ENCODE measurements at regions of chr11 and their contacts with region 1.

Region 1: GRCh38 chr11:62665075-62665598 is at the starts of genes C11orf98 and CSKMT:
- DNase-seq: peak; percentile 85
- ATAC-seq: peak; percentile 86
- H3K4me3 ChIP-seq: peak within 1 kb of the TSS; percentile 69 to 97 (median 91)
- H3K27ac ChIP-seq: peak within 1 kb of the TSS; percentile 84
- H3K4me1 ChIP-seq: peaks cover 47% of the 10 kb centered on the region
- H3K27me3 ChIP-seq: no peaks in the 10 kb centered on the region; a peak in 1 of 5 replicates
- CTCF ChIP-seq: no peak
- EP300 ChIP-seq: peak in 1 of 2 experiments; percentile 11; a peak in 2 of 4 replicates
- POLR2A ChIP-seq: peak; percentile 97 to 99
- RAD21 ChIP-seq: peak; percentile 55
- total RNA-seq, gene C11orf98: 91.8 and 109 TPM in 2 replicates
- total RNA-seq, gene CSKMT: 9.9 and 31.8 TPM in 2 replicates

Region 2: DNA sequence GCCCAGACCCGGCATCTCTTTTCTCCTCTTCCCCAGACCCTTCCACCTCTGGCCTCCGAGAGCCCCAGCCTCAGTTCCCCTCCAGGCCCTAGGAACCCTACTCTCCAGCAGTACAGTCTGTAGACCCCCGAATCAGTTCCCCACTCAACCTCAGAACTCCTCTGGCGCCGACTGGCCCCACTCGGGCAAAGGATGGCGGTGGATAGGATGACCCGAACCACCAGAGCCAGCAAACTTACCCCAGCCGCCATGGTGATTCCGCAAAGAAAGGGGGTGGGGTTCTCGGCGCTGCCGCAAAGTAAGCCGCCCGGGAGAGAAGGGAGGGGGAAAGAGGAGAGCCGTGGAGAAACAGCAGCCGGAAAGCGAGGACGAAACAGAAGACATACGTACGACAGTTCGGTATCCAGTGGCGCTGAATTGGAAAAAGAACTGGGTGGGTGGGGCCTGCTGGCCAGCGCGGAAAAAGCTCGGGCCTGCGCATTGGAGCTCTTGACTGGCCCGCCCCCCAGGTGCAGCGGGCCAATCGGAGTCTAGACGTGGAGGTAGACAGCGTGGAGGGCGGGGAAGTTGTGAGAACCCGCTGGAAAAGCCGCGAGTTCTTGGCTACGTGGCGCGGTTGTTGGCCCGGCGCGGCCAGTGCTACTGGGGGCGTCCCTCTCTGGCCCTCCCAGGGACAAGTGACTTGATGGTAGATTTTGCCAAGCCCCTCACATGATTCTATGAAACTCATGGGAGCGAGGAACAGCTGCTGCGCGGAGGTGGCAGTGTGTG is 91.4 kb before region 1 on chr11 and contains the start of gene EEF1G:
- CTCF ChIA-PET with region 1: no interaction called
- POLR2A ChIA-PET with region 1: interaction called, 35 read pairs
- in situ Hi-C with region 1: no loop called
- intact Hi-C with region 1: no loop called
- DNase-seq: peak; percentile 99
- ATAC-seq: peak; percentile 93
- H3K4me3 ChIP-seq: peak within 1 kb of the TSS; percentile 80 to 96 (median 95)
- H3K27ac ChIP-seq: peak within 1 kb of the TSS; percentile 85
- H3K4me1 ChIP-seq: peaks cover 63% of the 10 kb centered on the region
- H3K27me3 ChIP-seq: no peaks in the 10 kb centered on the region; a peak in 1 of 5 replicates
- CTCF ChIP-seq: no peak; the same call in 1 of the 2 replicates
- EP300 ChIP-seq: no peak
- POLR2A ChIP-seq: peak; percentile 89 to 91
- RAD21 ChIP-seq: no peak
- total RNA-seq, gene EEF1G: 1,787 and 2,092 TPM in 2 replicates

Region 3: DNA sequence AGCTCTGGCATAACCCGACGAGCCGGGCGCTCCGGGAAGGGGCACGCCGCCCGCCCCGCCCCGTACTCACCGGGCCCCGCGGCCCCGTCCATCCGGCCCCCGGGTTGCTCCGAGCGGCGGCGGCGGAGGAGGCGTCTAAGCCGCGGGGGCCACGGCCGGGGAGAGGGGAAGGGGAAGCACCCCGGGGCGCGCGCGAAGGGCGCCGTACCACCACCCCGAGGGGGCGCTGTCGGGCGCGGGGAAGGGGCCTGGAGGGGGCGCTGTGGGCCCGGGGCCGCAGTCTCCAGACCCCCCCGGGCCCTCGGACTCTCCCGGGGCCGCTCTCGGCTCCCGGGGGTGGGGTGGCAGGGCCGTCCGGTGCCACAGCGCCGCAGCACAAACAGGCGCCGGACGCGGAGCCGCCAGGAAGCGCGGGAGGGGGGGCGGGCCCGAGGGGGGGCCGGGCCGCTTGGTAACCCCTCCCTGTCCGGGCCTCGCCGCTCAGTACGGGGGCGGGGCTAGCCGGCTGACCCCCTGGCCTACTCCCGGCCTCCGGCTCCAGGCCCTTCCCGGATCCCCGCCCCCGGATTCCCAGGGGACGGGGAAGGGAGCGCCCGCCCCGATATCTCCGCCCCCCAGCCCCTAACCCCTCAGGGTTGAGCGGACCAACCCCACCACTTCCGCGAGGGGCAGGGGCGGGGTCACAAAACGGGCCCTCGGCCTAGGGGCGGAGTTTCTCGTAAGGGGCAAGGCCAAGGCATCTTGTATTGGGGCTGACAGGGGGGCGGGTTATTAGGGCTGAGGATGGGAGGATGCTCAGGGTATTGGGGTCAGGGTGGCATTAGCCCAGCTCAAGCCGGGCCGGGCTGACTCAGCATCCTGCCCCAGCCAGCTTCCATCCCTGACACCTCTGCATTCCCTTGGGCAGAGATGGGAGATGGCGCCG is 52.5 kb before region 1 on chr11 and contains the starts of genes EML3 and ROM1:
- CTCF ChIA-PET with region 1: no interaction called
- POLR2A ChIA-PET with region 1: interaction called, 20 read pairs
- in situ Hi-C with region 1: no loop called
- intact Hi-C with region 1: no loop called
- DNase-seq: peak; percentile 70
- ATAC-seq: peak; percentile 74
- H3K4me3 ChIP-seq: peak within 1 kb of the TSS; percentile 77 to 93 (median 77)
- H3K27ac ChIP-seq: peak within 1 kb of the TSS; percentile 64
- H3K4me1 ChIP-seq: peaks cover 50% of the 10 kb centered on the region
- H3K27me3 ChIP-seq: no peaks in the 10 kb centered on the region; a peak in 1 of 5 replicates
- CTCF ChIP-seq: peak; percentile 74
- EP300 ChIP-seq: no peak
- POLR2A ChIP-seq: peak in 1 of 2 experiments; percentile 19; a peak in 1 of 4 replicates
- RAD21 ChIP-seq: peak; percentile 73
- total RNA-seq, gene EML3: 4.6 and 10.6 TPM in 2 replicates
- total RNA-seq, gene ROM1: 1.8 and 2.4 TPM in 2 replicates

Region 4: DNA sequence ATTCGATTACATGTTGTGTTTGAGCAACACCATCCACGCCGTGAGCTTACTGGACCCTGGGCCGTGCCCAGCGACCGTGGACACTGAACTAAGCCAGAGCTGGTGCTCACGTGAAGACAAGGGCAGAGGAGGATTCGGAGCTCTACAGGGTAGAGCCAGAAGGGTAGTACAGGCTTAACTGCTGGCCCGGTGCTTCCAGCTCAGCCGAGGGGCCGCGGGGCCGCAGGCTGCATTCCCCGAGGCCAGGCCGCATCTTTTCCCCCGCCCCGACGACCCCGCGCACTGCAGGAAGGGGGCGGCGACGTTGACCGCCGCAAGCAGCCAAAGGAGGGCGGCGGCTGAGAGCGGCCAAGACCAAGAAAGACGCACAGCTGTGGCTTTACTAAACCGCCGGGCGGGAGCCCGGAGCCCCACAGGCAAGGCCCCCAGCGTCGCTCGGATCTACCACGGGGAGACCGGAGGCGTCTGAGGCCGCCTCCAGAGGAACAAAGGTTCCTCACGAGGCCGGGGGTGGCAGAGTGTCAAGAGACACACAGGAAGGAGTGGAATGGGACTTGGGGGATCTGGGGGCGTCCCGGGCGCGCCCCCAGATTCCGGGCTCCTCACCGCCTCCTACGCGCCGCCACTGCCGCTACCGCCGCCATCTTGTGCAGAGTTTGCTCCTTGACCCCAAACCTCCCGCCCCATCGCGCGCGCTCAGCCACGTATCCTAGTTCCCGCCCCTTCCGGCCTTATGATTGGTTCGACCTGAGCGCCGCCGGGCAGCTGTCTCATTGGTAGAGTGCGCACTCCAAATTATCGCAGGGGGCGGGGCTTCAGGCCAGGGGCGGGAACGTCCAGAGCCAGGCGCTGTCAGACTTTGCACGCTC is 18.9 kb before region 1 on chr11 and contains the start of gene GANAB:
- CTCF ChIA-PET with region 1: no interaction called
- POLR2A ChIA-PET with region 1: interaction called, 98 read pairs
- in situ Hi-C with region 1: no loop called
- intact Hi-C with region 1: no loop called
- DNase-seq: peak; percentile 95
- ATAC-seq: peak; percentile 94
- H3K4me3 ChIP-seq: peak within 1 kb of the TSS; percentile 86 to 96 (median 90)
- H3K27ac ChIP-seq: peak within 1 kb of the TSS; percentile 98
- H3K4me1 ChIP-seq: peaks cover 53% of the 10 kb centered on the region
- H3K27me3 ChIP-seq: no peaks in the 10 kb centered on the region
- CTCF ChIP-seq: no peak
- EP300 ChIP-seq: no peak; a peak in 1 of 4 replicates
- POLR2A ChIP-seq: peak; percentile 92 to 95
- RAD21 ChIP-seq: no peak
- total RNA-seq, gene GANAB: 50.8 and 99.5 TPM in 2 replicates

Region 5: DNA sequence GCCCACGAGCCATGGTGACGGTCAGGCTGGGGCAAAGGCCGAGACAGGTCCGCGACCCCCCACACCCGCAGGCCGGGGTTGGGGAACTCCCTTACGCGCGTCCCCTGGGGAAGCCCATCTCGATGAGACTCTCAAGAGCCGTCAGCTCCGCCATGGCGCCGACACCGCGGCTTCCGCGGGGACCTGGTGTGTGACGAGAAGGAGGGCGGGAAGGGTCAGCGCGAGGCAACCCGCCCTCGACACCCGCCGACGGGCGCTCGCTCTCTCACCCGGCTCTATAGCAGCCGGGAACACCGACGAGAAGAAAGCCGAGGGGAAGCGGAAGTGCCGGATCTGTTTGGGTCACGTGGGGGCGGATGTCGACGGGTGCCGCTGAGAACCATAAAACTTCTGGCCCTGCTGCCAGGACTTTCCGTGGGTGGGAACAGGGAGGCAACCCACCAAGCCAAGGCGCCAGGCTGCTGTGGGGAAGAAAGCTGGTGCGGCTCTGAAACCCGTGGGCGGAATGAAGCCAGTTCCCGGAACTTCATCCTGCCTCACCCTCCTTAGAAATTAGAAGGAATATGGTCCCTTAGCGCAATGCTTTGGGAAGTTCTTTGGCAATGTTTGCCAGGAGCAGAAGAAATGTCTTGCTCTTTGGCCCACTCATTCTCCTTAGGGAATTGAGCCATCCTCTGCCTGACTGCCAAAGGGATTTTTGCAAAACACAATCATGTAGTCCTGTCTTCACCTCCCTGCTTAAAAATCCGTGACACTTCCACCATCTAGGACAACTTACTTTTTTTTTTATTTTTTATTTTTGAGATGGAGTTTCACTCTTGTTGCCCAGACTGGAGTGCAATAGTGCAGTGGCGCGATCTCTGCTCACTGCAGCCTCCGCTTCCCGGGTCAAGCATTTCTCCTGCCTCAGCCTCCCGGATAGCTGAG is 13.9 kb after region 1 on chr11 and contains the start of gene UBXN1:
- CTCF ChIA-PET with region 1: no interaction called
- POLR2A ChIA-PET with region 1: interaction called, 64 read pairs
- in situ Hi-C with region 1: no loop called
- intact Hi-C with region 1: no loop called
- DNase-seq: peak; percentile 79
- ATAC-seq: peak; percentile 79
- H3K4me3 ChIP-seq: peak within 1 kb of the TSS; percentile 88 to 98 (median 94)
- H3K27ac ChIP-seq: peak within 1 kb of the TSS; percentile 86
- H3K4me1 ChIP-seq: peaks cover 37% of the 10 kb centered on the region
- H3K27me3 ChIP-seq: no peaks in the 10 kb centered on the region
- CTCF ChIP-seq: no peak
- EP300 ChIP-seq: no peak
- POLR2A ChIP-seq: peak; percentile 72 to 79
- RAD21 ChIP-seq: no peak; the same call in 1 of the 2 replicates
- total RNA-seq, gene UBXN1: 52.4 and 58.9 TPM in 2 replicates

Region 6: GRCh38 chr11:62716816-62717215 is 51.7 kb after region 1 on chr11:
- CTCF ChIA-PET with region 1: no interaction called
- POLR2A ChIA-PET with region 1: no interaction called
- in situ Hi-C with region 1: no loop called
- intact Hi-C with region 1: no loop called
- DNase-seq: no peak
- ATAC-seq: no peak
- H3K4me3 ChIP-seq: no peak overlapping the region
- H3K27ac ChIP-seq: no peak overlapping the region
- H3K4me1 ChIP-seq: peaks cover 5% of the 10 kb centered on the region
- H3K27me3 ChIP-seq: no peaks in the 10 kb centered on the region
- CTCF ChIP-seq: no peak
- EP300 ChIP-seq: no peak
- POLR2A ChIP-seq: no peak
- RAD21 ChIP-seq: no peak

Region 7: GRCh38 chr11:62753736-62754603 is 88.8 kb after region 1 on chr11 and contains the start of gene ZBTB3:
- CTCF ChIA-PET with region 1: no interaction called
- POLR2A ChIA-PET with region 1: interaction called, 31 read pairs
- in situ Hi-C with region 1: no loop called
- intact Hi-C with region 1: no loop called
- DNase-seq: peak; percentile 99
- ATAC-seq: peak; percentile 96
- H3K4me3 ChIP-seq: peak within 1 kb of the TSS; percentile 55 to 86 (median 81)
- H3K27ac ChIP-seq: peak within 1 kb of the TSS; percentile 75
- H3K4me1 ChIP-seq: peaks cover 35% of the 10 kb centered on the region
- H3K27me3 ChIP-seq: no peaks in the 10 kb centered on the region
- CTCF ChIP-seq: peak; percentile 29; the same call in 1 of the 2 replicates
- EP300 ChIP-seq: no peak
- POLR2A ChIP-seq: peak; percentile 83 to 88
- RAD21 ChIP-seq: no peak; the same call in 1 of the 2 replicates
- total RNA-seq, gene ZBTB3: 4.0 and 5.2 TPM in 2 replicates

Region 8: GRCh38 chr11:62855571-62856332 is 190.6 kb after region 1 on chr11:
- CTCF ChIA-PET with region 1: no interaction called
- POLR2A ChIA-PET with region 1: interaction called, 12 read pairs
- in situ Hi-C with region 1: no loop called
- intact Hi-C with region 1: no loop called
- DNase-seq: peak; percentile 97
- ATAC-seq: peak; percentile 79
- H3K4me3 ChIP-seq: peak overlapping the region; percentile 86 to 96 (median 94)
- H3K27ac ChIP-seq: peak overlapping the region; percentile 91
- H3K4me1 ChIP-seq: peaks cover 77% of the 10 kb centered on the region
- H3K27me3 ChIP-seq: no peaks in the 10 kb centered on the region; a peak in 1 of 5 replicates
- CTCF ChIP-seq: peak; percentile 23; the same call in 1 of the 2 replicates
- EP300 ChIP-seq: 0 out of 4 replicates have a peak, but pooled peaks of 1 of the 2 experiments have one; percentile 8
- POLR2A ChIP-seq: peak; percentile 99 to 100
- RAD21 ChIP-seq: peak; percentile 16; the same call in 1 of the 2 replicates